ENCODE measurements at regions of chr2 and their contacts with region 1.

Region 1: GRCh38 chr2:27016801-27017325 is 15.9 kb upstream of the TMEM214 start:
- DNase-seq: peak; percentile 69 to 77
- H3K4me3 ChIP-seq: no peak overlapping the region
- H3K4me1 ChIP-seq: no peaks in the 10 kb centered on the region; the same call in 1 of the 2 replicates
- H3K27me3 ChIP-seq: no peaks in the 10 kb centered on the region

Region 2: DNA sequence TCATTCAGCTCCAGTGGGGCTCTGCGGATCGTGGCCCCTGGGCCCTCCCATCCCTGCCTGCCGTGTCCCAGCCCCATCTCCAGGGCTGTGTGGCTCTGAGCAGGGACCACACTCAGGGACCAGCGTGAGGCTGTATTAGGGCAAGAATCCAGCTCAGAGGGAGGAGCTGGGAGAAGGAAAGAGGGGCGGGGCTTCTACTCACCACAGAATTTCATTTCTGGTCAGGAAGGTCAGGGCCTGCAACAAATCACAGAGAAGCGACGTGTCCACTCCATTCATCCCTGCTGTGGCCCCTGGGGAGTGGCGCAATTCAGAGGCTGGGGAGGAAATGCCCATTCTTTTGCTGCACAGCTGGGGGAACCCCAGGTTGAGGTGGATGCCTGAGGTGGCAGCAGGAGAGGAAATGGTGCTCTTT is 376.5 kb before region 1 on chr2:
- in situ Hi-C with region 1: no loop called
- DNase-seq: peak in 1 of 2 experiments; percentile 20
- H3K4me3 ChIP-seq: no peak overlapping the region
- H3K4me1 ChIP-seq: no peaks in the 10 kb centered on the region; the same call in 1 of the 2 replicates
- H3K27me3 ChIP-seq: peaks cover 7% of the 10 kb centered on the region

Region 3: GRCh38 chr2:26846328-26847306 is 170.2 kb before region 1 on chr2:
- in situ Hi-C with region 1: loop called (anchors 5 kb)
- DNase-seq: peak; percentile 85 to 87
- H3K4me3 ChIP-seq: peak overlapping the region; percentile 89; the same call in 1 of the 2 replicates
- H3K4me1 ChIP-seq: peaks cover 17% of the 10 kb centered on the region
- H3K27me3 ChIP-seq: peaks cover 12% of the 10 kb centered on the region

Region 4: DNA sequence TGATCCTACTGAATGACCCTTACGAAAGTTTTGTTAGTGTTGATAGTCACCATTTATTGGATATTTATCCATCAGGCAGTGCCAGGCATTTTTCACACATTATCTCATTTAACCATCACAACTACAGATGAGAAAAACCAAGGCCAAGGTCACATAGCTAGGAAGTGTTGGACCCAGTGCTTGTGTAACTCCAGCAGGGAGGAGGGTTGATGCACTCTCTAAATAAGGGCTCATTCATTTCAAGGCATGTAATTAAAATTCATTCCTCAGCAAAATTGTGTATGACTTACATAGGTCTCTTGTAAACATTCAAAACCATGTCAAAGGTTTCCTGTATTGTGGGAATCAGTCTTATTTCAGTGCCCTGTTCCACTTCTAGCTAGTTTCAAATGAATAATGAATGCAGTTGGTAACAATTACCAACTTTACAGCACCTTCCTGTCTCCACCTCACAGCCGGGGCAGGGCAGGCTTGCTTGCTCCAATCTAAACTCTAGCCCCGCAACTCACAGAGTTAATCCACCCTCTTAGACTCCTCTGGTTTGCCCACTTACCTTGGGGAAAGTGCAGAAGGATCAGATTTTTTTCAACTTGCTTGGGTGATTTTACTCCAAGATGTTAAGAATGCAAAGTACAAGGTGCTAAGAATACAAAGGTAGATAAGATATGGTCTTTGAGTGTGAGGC is 52.3 kb before region 1 on chr2:
- in situ Hi-C with region 1: loop called (anchors 5 kb)
- DNase-seq: no peak
- H3K4me3 ChIP-seq: no peak overlapping the region
- H3K4me1 ChIP-seq: no peaks in the 10 kb centered on the region
- H3K27me3 ChIP-seq: peaks cover 37% of the 10 kb centered on the region

Measured in HAP-1 (cell line).